Activated T-helper 1 cell treated with anti-CD3 and anti-CD28 coated beads, Interleukin-12 subunit alpha, Interleukin-12 subunit beta, Interleukin-2, Interleukin-4 antibody, amounts not matched to agents 30 ng/mL and 10 ng/mL and 1 ng/mL, durations not matched to agents 14 hours and 24 hours and 36 hours (primary cell): ENCODE measurements at regions of chr19 and their contacts with region 1.

Region 1: GRCh38 chr19:4831304-4831978 is at the start of gene TICAM1:
- DNase-seq: peak; percentile 85
- H3K4me3 Mint-ChIP-seq: peak within 1 kb of the TSS; percentile 91
- H3K27ac Mint-ChIP-seq: peak within 1 kb of the TSS; percentile 94
- H3K4me1 Mint-ChIP-seq: peaks cover 22% of the 10 kb centered on the region
- H3K27me3 Mint-ChIP-seq: no peaks in the 10 kb centered on the region
- total RNA-seq, gene TICAM1: 31.2 and 33.3 TPM in 2 replicates

Region 2: DNA sequence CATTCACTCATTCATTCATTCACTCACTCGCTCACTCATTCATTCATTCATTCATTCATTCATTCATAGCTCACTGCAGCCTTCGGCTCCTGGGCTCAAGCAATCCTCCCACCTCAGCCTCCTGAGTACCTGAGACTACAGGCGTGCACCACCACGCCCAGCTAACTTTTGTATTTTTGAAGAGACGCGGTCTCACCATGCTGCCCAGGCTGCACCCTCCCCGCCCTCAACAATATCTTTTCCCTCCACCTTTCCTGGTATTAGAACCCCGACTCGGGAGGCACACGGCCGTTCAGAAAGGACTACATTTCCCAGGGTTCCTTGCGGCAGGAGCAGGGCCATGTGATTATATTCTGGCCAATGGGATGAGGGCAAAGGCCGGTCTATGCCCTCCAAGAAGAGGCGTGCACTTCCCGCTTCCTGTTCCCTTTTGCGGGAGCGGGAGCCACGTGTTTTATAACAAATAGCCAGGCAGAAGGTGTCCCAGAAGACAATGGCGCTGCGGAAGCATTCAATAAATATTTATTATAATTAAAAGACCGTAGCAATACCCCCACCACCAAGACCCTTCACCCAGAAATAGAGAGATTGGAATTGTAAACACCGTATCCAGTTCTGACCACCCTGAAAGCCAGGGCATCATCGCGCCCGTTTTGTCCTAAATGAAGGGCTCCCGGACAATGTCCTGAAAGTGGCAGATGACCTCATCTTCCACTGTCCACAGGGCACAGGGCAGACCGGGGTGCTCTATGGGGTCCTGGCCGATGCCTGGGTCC is 15.8 kb before region 1 on chr19:
- intact Hi-C with region 1: loop called (anchors 1 kb)
- DNase-seq: peak; percentile 66
- H3K4me3 Mint-ChIP-seq: peak overlapping the region; percentile 63
- H3K27ac Mint-ChIP-seq: peak overlapping the region; percentile 67
- H3K4me1 Mint-ChIP-seq: peaks cover 24% of the 10 kb centered on the region
- H3K27me3 Mint-ChIP-seq: no peaks in the 10 kb centered on the region

Region 3: DNA sequence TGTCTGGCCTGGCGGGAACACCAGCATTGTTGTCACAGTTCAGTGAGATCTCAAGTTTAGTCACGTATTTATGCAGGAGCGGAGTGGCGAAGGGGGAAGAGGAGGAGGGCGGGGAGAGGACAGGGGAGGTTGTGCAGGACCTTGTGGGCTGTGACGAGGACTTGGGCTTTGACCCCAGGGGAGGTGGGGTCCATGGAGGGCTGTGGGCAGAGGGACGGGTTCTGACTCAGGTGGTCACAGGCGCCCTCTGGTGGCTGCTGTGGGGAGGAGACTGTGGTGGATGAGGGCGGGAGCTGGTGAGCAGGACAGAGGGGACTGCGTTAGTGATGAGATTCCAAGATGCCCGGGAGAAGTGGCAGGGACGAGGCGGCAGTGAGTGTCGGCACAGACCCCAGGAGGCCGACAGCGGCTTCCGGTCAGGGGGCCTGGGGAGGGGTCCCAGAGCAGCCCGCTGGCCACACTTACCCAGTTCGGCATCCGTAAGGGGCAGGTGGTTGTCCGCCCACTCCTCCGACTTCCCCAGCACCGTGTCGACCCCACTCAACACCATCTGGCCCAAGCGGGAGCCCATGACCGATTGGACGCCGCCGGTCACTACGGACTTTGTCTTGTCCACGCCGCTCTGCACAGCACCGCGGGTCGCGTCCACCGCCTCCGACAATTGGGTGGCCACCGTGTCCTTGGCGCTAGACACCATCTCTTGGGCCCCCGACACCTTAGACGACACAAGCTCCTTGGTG is 20.3 kb after region 1 on chr19:
- intact Hi-C with region 1: loop called (anchors 1 kb)
- DNase-seq: peak; percentile 56
- H3K4me3 Mint-ChIP-seq: no peak overlapping the region
- H3K27ac Mint-ChIP-seq: no peak overlapping the region
- H3K4me1 Mint-ChIP-seq: no peaks in the 10 kb centered on the region
- H3K27me3 Mint-ChIP-seq: no peaks in the 10 kb centered on the region